Common myeloid progenitor, CD34-positive (primary cell): ENCODE measurements at regions of chr7 and their contacts with region 1.

Region 1: DNA sequence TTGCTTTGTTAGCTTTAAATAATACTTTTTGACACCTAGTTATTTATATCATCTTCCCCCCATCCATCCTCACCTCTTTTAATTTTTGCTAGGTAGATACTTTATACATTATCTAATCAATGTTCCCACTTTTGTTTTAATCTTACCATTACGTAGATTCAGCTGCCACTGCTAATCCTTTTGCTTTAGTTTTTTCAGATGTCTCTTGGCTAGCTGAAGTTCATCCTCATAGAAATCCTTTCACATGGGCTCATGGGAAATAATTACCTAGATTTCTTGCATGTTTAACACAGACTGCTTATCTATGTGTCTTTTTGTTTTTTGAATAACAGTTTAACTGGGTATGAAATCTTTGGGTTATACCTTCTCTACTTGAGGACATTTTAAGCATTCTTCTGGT is 60.1 kb downstream of the ZNRF2 start:
- DNase-seq: no peak
- H3K4me3 ChIP-seq: no peak overlapping the region
- H3K27ac ChIP-seq: no peak overlapping the region
- H3K4me1 ChIP-seq: peaks cover 15 to 39% (median 26%) of the 10 kb centered on the region in 4 experiments
- H3K27me3 ChIP-seq: no peaks in the 10 kb centered on the region

Region 2: GRCh38 chr7:30330134-30331111 is 14.1 kb before region 1 on chr7:
- CTCF ChIA-PET with region 1: interaction called, 20 read pairs
- POLR2A ChIA-PET with region 1: interaction called, 4 read pairs
- DNase-seq: peak; percentile 51 to 81 (median 71)
- H3K4me3 ChIP-seq: peak overlapping the region in 4 of 7 experiments; percentile 1 to 53 (median 38)
- H3K27ac ChIP-seq: peak overlapping the region in 1 of 2 experiments; percentile 27
- H3K4me1 ChIP-seq: peaks cover 8 to 18% (median 11%) of the 10 kb centered on the region in 4 experiments
- H3K27me3 ChIP-seq: no peaks in the 10 kb centered on the region

Region 3: GRCh38 chr7:30369879-30370278 is 25.4 kb after region 1 on chr7:
- CTCF ChIA-PET with region 1: no interaction called
- POLR2A ChIA-PET with region 1: no interaction called
- DNase-seq: no peak
- H3K4me3 ChIP-seq: no peak overlapping the region
- H3K27ac ChIP-seq: no peak overlapping the region
- H3K4me1 ChIP-seq: no peaks in the 10 kb centered on the region
- H3K27me3 ChIP-seq: no peaks in the 10 kb centered on the region